H1 (cell line): ENCODE measurements at regions of chr22 and their contacts with region 1.

Region 1: GRCh38 chr22:41596776-41597634 is 7.4 kb upstream of the PMM1 start:
- DNase-seq: peak; percentile 54 to 87
- H3K4me3 ChIP-seq: no peak overlapping the region
- H3K27ac ChIP-seq: no peak overlapping the region
- H3K4me1 ChIP-seq: 0 out of 7 replicates have a peak, but pooled peaks cover 0 to 2% (median 0%) of the 10 kb centered on the region in 4 experiments
- H3K27me3 ChIP-seq: no peaks in the 10 kb centered on the region
- CTCF ChIP-seq: peak; percentile 96 to 100 (median 98)
- EP300 ChIP-seq: no peak
- POLR2A ChIP-seq: no peak; a peak in 1 of 3 replicates
- RAD21 ChIP-seq: peak; percentile 92 to 93

Region 2: GRCh38 chr22:41526837-41527799 is 69.9 kb before region 1 on chr22:
- CTCF ChIA-PET with region 1: interaction called, 11 read pairs
- POLR2A ChIA-PET with region 1: interaction called, 4 read pairs
- DNase-seq: peak in 1 of 2 experiments; percentile 90
- H3K4me3 ChIP-seq: no peak overlapping the region
- H3K27ac ChIP-seq: no peak overlapping the region
- H3K4me1 ChIP-seq: no peaks in the 10 kb centered on the region; a peak in 1 of 7 replicates
- H3K27me3 ChIP-seq: no peaks in the 10 kb centered on the region
- CTCF ChIP-seq: peak; percentile 76 to 91 (median 85)
- EP300 ChIP-seq: no peak
- POLR2A ChIP-seq: peak in 1 of 2 experiments; percentile 62; a peak in 1 of 3 replicates
- RAD21 ChIP-seq: peak; percentile 70 to 76

Region 3: GRCh38 chr22:41557401-41558240 is 39.4 kb before region 1 on chr22:
- CTCF ChIA-PET with region 1: interaction called, 46 read pairs
- POLR2A ChIA-PET with region 1: interaction called, 4 read pairs
- DNase-seq: peak in 1 of 2 experiments; percentile 58
- H3K4me3 ChIP-seq: no peak overlapping the region; a peak in 1 of 8 replicates
- H3K27ac ChIP-seq: no peak overlapping the region
- H3K4me1 ChIP-seq: peaks cover 4 to 28% (median 19%) of the 10 kb centered on the region in 4 experiments
- H3K27me3 ChIP-seq: no peaks in the 10 kb centered on the region
- CTCF ChIP-seq: no peak
- EP300 ChIP-seq: no peak
- POLR2A ChIP-seq: no peak
- RAD21 ChIP-seq: no peak

Region 4: GRCh38 chr22:41576877-41577276 is 20.1 kb before region 1 on chr22:
- CTCF ChIA-PET with region 1: interaction called, 164 read pairs
- POLR2A ChIA-PET with region 1: interaction called, 7 read pairs
- DNase-seq: peak in 1 of 2 experiments; percentile 85
- H3K4me3 ChIP-seq: no peak overlapping the region
- H3K27ac ChIP-seq: no peak overlapping the region
- H3K4me1 ChIP-seq: no peaks in the 10 kb centered on the region; a peak in 2 of 7 replicates
- H3K27me3 ChIP-seq: no peaks in the 10 kb centered on the region
- CTCF ChIP-seq: peak; percentile 94 to 99 (median 98)
- EP300 ChIP-seq: no peak
- POLR2A ChIP-seq: no peak
- RAD21 ChIP-seq: peak; percentile 75 to 85

Region 5: DNA sequence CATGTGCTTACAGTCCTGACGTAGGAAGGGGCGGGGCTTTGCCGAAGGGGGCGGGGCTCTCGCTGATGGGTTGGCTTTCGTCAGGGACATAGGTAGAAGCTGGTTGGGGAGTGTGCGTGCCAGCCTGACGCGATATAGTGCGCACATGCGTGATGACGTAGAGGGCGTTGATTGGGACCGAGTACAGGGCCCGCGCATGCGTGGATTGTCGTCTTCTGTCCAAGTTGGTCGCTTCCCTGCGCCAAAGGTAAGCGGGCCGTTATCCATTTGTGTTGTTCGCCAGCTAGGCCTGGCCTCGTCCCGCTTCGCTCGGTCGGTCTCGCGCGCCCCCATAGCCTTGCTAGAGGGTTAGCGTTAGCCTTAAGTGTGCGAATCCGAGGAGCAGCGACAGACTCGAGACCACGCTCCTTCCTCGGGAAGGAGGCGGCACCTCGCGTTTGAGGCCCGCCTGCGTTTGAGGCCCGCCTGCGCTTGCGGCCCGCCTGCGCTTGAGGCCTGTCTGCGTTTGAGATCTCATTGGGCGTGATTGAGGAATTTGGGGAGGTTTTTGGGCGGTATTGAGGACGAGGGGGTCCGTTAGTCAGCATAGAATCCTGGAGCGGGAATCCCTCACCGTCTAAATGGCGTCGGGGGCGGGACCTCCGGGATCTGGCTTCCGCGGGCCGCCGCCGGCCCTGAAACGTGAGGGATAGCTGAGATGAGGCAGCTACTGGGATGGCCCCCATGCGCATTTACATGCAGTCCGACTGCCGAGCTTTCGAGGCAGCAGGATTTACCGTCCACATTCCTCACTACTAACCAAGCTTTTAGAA is 24.3 kb after region 1 on chr22 and contains the start of gene XRCC6:
- CTCF ChIA-PET with region 1: interaction called, 18 read pairs
- POLR2A ChIA-PET with region 1: interaction called, 25 read pairs
- DNase-seq: peak; percentile 100
- H3K4me3 ChIP-seq: peak within 1 kb of the TSS; percentile 78 to 98 (median 96)
- H3K27ac ChIP-seq: peak within 1 kb of the TSS; percentile 98
- H3K4me1 ChIP-seq: peaks cover 0 to 11% (median 4%) of the 10 kb centered on the region in 4 experiments; a peak in 5 of 7 replicates
- H3K27me3 ChIP-seq: no peaks in the 10 kb centered on the region
- CTCF ChIP-seq: no peak
- EP300 ChIP-seq: 0 out of 3 replicates have a peak, but pooled peaks of 1 of the 2 experiments have one; percentile 7
- POLR2A ChIP-seq: peak; percentile 91 to 95
- RAD21 ChIP-seq: no peak
- total RNA-seq, gene XRCC6: 488 and 490 TPM in 2 replicates

Region 6: DNA sequence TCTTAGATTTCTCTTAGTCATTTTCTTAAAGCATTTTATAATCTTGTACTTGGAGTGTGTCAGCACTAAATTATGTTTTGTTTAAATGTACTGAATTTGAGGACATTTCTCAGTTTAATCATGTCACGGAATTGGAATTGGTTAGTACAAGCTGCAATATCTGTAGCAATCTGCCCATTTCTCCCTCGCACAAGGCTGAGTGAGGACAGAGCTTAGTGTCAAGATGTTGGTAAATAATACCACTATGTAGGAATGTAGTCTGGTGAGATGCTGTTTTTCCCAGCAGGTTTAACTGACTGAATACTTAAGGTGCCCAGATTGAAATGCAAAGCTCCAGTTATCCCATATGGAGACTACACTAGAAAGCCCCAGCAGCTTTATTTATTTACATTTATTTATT is 266.5 kb after region 1 on chr22:
- CTCF ChIA-PET with region 1: no interaction called
- POLR2A ChIA-PET with region 1: no interaction called
- DNase-seq: no peak
- H3K4me3 ChIP-seq: no peak overlapping the region
- H3K27ac ChIP-seq: no peak overlapping the region
- H3K4me1 ChIP-seq: peaks cover 0 to 6% (median 4%) of the 10 kb centered on the region in 4 experiments; a peak in 4 of 7 replicates
- H3K27me3 ChIP-seq: no peaks in the 10 kb centered on the region
- CTCF ChIP-seq: no peak
- EP300 ChIP-seq: no peak
- POLR2A ChIP-seq: no peak
- RAD21 ChIP-seq: no peak